ENCODE measurements at regions of chr7 and their contacts with region 1.

Region 1: DNA sequence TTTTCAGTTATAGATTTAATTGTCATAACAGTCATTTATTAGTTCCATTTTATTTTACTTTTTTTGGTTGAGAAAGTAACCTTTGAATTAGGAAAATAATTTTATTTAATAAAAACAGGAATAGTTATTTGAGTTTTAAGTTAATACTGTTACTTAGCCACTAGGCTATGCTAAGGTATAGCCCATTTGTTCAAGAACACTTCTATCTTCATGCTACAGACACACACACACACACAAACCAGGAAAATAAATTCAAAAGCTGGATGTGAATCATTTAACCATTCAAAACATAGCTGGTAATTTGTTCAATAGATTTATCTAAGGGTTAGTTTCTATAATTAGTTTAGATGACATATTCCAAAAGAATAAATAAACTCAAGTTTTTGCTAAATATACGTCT is 148.4 kb downstream of the RNF133 start:
- DNase-seq: no peak
- H3K4me3 ChIP-seq: no peak overlapping the region
- H3K27ac ChIP-seq: no peak overlapping the region
- H3K4me1 ChIP-seq: no peaks in the 10 kb centered on the region
- H3K27me3 ChIP-seq: no peaks in the 10 kb centered on the region
- CTCF ChIP-seq: peak; percentile 37; the same call in 1 of the 2 replicates

Region 2: GRCh38 chr7:122602800-122603199 is 52.3 kb after region 1 on chr7:
- CTCF ChIA-PET with region 1: no interaction called
- POLR2A ChIA-PET with region 1: no interaction called
- intact Hi-C with region 1: no loop called
- DNase-seq: no peak
- H3K4me3 ChIP-seq: no peak overlapping the region
- H3K27ac ChIP-seq: no peak overlapping the region
- H3K4me1 ChIP-seq: no peaks in the 10 kb centered on the region
- H3K27me3 ChIP-seq: no peaks in the 10 kb centered on the region
- CTCF ChIP-seq: no peak

Region 3: GRCh38 chr7:122886357-122887081 is 336.0 kb after region 1 on chr7 and contains the start of gene CADPS2:
- CTCF ChIA-PET with region 1: no interaction called
- POLR2A ChIA-PET with region 1: no interaction called
- intact Hi-C with region 1: loop called (anchors 5 kb)
- DNase-seq: peak; percentile 96
- H3K4me3 ChIP-seq: peak within 1 kb of the TSS; percentile 91
- H3K27ac ChIP-seq: peak within 1 kb of the TSS; percentile 93
- H3K4me1 ChIP-seq: peaks cover 22% of the 10 kb centered on the region
- H3K27me3 ChIP-seq: no peaks in the 10 kb centered on the region
- CTCF ChIP-seq: no peak; the same call in 1 of the 2 replicates
- total RNA-seq, gene CADPS2: 74.4 and 81.3 TPM in 2 replicates